K562 (cell line): ENCODE measurements at regions of chr1 and their contacts with region 1.

Region 1: GRCh38 chr1:150955280-150955679 is 19.4 kb downstream of the CERS2 start:
- DNase-seq: peak in 3 of 4 experiments; percentile 4 to 33 (median 7)
- ATAC-seq: peak; percentile 41; the same call in 1 of the 3 replicates
- H3K4me3 ChIP-seq: no peak overlapping the region
- H3K27ac ChIP-seq: no peak overlapping the region
- H3K4me1 ChIP-seq: no peaks in the 10 kb centered on the region
- H3K27me3 ChIP-seq: no peaks in the 10 kb centered on the region
- CTCF ChIP-seq: no peak
- EP300 ChIP-seq: no peak
- POLR2A ChIP-seq: no peak
- RAD21 ChIP-seq: no peak

Region 2: DNA sequence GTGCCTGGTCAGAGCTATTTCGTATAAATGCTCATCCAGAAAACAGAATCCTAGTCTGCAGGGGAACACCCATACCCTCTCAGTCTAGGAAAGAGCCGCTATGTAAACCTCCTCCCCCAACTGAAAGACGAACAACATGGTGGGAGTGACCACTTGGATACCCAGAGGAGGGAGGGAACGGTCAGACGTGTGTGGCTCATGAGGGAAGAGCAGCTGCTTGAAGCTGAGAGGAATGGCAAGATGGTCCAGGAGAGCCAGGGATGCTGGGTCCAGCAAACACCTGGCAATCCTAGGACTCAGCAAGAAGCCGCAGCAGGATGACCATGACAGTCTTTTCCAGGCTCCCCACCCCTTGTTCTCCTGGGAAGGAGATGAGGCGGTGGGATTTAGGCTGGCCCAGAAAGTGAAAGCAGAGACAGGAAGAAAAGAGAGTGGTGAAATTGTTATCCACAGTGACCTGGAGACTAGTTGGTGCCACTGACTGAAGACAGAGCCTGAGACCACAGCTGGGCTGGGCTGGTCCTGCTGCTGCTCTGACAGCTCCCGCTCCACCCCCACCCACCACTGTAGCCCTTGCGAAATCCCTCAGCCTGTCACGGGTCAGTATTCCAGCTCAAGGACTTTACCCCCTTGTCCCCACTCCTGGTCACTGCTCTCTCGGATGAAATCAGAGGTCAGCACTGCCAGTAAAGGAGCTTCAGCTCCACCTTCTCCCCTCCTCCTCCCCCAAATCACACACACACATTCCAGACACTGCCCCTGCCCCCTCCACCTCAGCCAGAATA is 15.7 kb after region 1 on chr1:
- CTCF ChIA-PET with region 1: no interaction called
- POLR2A ChIA-PET with region 1: interaction called, 64 read pairs
- in situ Hi-C with region 1: no loop called
- intact Hi-C with region 1: no loop called
- DNase-seq: peak in 1 of 4 experiments; percentile 55
- ATAC-seq: peak; percentile 4; the same call in 1 of the 3 replicates
- H3K4me3 ChIP-seq: no peak overlapping the region
- H3K27ac ChIP-seq: peak overlapping the region; percentile 26; the same call in 1 of the 3 replicates
- H3K4me1 ChIP-seq: peaks cover 32 to 48% of the 10 kb centered on the region in 2 experiments
- H3K27me3 ChIP-seq: no peaks in the 10 kb centered on the region
- CTCF ChIP-seq: no peak
- EP300 ChIP-seq: no peak
- POLR2A ChIP-seq: no peak
- RAD21 ChIP-seq: no peak

Region 3: GRCh38 chr1:150981140-150981695 is 25.9 kb after region 1 on chr1:
- CTCF ChIA-PET with region 1: no interaction called
- POLR2A ChIA-PET with region 1: no interaction called
- in situ Hi-C with region 1: no loop called
- intact Hi-C with region 1: no loop called
- DNase-seq: no peak
- ATAC-seq: no peak
- H3K4me3 ChIP-seq: no peak overlapping the region
- H3K27ac ChIP-seq: no peak overlapping the region
- H3K4me1 ChIP-seq: peaks cover 42 to 53% of the 10 kb centered on the region in 2 experiments
- H3K27me3 ChIP-seq: no peaks in the 10 kb centered on the region
- CTCF ChIP-seq: no peak
- EP300 ChIP-seq: no peak
- POLR2A ChIP-seq: no peak
- RAD21 ChIP-seq: no peak

Region 4: DNA sequence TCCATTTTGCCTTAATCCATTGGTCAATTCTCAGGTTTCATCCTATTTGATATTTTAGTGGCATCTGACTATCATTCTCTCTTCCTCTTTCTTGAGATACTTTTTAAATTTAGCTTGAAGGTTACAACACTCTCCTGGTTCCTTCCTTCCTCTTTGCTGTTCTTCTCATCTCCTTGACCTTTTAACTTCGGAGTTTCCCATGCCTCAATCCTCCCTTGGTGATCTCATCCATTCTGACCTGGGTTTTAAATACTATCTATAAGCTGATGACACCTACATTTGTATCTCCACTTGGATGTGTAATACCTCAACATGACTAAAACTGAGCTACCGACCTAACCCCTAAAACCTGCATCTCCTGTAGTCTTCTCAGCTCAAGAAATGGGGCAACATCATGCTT is 322.0 kb after region 1 on chr1:
- CTCF ChIA-PET with region 1: no interaction called
- POLR2A ChIA-PET with region 1: no interaction called
- in situ Hi-C with region 1: no loop called
- intact Hi-C with region 1: no loop called
- DNase-seq: no peak
- ATAC-seq: no peak
- H3K4me3 ChIP-seq: no peak overlapping the region
- H3K27ac ChIP-seq: no peak overlapping the region
- H3K4me1 ChIP-seq: peaks cover 14% of the 10 kb centered on the region in 2 experiments; a peak in 4 of 5 replicates
- H3K27me3 ChIP-seq: no peaks in the 10 kb centered on the region
- CTCF ChIP-seq: no peak
- EP300 ChIP-seq: no peak
- POLR2A ChIP-seq: no peak
- RAD21 ChIP-seq: no peak